IMR-90 (cell line): ENCODE measurements at regions of chr4 and their contacts with region 1.

Region 1: GRCh38 chr4:75211408-75211807 is 278.5 kb downstream of the PARM1 start:
- DNase-seq: no peak
- ATAC-seq: no peak
- H3K4me3 ChIP-seq: no peak overlapping the region
- H3K27ac ChIP-seq: no peak overlapping the region
- H3K4me1 ChIP-seq: no peaks in the 10 kb centered on the region
- H3K27me3 ChIP-seq: no peaks in the 10 kb centered on the region
- CTCF ChIP-seq: no peak
- POLR2A ChIP-seq: no peak
- RAD21 ChIP-seq: no peak

Region 2: DNA sequence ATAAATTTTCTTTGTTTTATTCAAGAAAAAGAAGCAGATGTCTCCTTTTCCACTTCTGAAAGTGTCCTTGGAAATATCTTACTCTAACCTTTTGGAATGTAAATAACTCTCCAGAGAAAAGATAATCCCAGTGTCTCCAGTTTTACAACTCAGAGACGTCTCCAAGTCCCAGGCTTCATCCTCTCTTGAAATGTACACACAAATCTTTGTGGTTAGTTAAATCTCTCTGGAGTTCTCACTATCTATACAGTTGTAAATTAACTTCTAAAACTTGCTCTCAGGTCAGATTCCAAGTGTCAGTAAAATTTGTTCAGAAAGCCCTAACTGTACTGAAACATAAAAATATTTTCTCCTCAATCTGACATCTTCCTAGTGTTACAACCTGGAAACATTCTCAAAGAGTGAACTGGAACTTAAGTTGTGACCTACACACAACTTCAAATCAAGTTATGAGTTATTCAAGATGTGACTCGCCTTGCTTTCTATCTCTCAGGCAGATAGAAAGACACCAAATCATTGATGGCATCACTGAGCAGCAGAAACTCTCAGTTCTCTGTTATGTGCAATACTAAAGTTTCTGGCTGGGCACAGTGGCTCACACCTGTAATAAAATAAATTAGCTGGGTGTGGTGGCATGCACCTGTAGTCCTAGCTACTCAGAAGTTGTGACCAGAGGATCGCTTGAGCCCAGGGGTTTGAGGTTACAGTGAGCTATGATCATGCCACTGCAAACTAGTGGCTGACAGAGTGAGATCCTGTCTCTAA is 18.6 kb after region 1 on chr4:
- CTCF ChIA-PET with region 1: no interaction called
- POLR2A ChIA-PET with region 1: interaction called, 10 read pairs
- dilution Hi-C with region 1: no loop called
- in situ Hi-C with region 1: no loop called
- intact Hi-C with region 1: no loop called
- DNase-seq: peak; percentile 7
- ATAC-seq: peak; percentile 53
- H3K4me3 ChIP-seq: no peak overlapping the region
- H3K27ac ChIP-seq: no peak overlapping the region
- H3K4me1 ChIP-seq: no peaks in the 10 kb centered on the region
- H3K27me3 ChIP-seq: no peaks in the 10 kb centered on the region
- CTCF ChIP-seq: no peak
- POLR2A ChIP-seq: no peak
- RAD21 ChIP-seq: no peak